Activated naive CD4-positive, alpha-beta T cell treated with anti-CD3 and anti-CD28 coated beads for 36 hours (primary cell): ENCODE measurements at regions of chr5 and their contacts with region 1.

Region 1: DNA sequence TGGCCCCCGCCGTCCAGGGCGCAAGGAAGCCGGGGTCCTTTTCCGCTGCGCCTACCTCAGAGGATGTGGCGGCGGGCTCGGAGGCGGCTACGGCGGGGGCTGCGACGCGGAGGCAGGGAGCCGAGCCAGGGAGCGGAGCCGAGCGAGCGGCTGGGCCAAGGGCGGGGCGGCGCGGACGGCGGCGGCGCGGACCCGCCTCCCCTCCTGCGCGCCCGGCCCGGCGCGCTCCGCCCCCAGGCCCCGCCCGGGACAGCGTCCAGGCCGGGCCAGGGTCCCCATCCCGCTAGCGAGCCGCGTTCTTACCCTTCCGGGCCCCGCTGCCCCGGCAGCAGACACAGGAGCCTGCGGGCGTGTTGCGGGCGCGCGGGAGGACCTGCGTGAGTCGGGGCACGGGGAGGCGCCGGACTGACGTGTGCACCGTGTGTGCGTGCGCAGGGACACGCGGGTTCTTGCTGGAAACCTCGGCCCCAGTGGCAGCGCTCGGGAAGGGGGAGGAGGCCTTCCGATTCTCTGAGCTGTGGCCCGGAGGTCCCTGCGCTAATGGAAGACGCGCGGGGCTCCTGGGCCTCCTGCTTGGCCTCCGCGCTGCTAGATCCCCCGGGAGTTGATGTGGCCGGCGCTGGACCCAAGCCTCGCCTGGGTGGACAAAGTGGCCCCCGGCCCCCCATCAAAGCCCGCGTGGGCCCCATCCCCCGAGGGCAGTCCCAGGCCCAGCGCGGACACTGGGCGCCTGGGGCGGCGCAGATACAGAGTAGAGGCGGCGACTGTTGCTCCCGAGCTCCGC is at the start of gene VDAC1:
- DNase-seq: peak; percentile 79
- H3K4me3 Mint-ChIP-seq: peak within 1 kb of the TSS; percentile 89
- H3K27ac Mint-ChIP-seq: peak within 1 kb of the TSS; percentile 95
- H3K4me1 Mint-ChIP-seq: peaks cover 42% of the 10 kb centered on the region
- H3K27me3 Mint-ChIP-seq: no peaks in the 10 kb centered on the region
- total RNA-seq, gene VDAC1: 485 to 513 TPM

Region 2: DNA sequence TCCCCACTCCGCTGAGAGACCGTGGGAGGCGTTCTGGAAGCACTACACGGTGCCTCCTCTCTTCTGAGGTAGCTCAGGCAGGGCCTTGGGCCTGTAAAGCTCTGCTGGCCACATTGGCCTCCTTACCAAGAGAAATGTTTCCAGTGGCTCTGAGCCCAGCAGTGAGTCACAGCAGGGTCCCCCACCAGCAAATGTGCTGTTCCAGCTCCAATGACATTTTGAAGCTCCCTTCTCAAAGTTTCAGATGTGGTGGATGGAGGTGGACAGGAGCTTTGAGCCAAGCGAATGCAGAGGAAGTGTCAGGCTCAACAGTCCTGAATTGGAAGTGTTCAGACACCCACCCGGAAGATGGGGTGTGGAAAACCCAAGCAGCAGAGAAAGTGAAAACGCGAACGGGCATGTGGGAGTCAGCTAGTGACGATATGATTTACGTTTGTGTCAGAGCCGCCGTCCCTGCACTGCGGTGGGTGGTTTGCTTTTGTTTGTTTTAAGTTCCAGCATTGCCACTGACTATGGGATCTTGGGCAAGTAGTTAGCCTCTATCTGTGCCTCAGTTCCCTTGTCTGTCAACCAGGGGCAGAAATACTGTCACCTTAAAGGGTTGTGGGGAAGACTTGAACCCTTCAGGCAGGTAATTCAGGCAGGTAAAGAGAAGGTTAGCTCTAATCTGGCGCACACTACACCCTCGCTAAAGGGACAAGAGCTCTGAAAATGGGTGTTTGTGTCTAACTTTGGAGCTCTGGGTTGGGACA is 74.5 kb before region 1 on chr5:
- CTCF ChIA-PET with region 1: interaction called, 3 read pairs
- intact Hi-C with region 1: loop called (anchors 2 kb)
- DNase-seq: peak; percentile 88
- H3K4me3 Mint-ChIP-seq: peak overlapping the region; percentile 80
- H3K27ac Mint-ChIP-seq: peak overlapping the region; percentile 97
- H3K4me1 Mint-ChIP-seq: peaks cover 45% of the 10 kb centered on the region
- H3K27me3 Mint-ChIP-seq: no peaks in the 10 kb centered on the region

Region 3: GRCh38 chr5:133968049-133968980 is 36.5 kb before region 1 on chr5 and contains the start of gene C5orf15:
- CTCF ChIA-PET with region 1: no interaction called
- intact Hi-C with region 1: loop called (anchors 1 kb)
- DNase-seq: peak; percentile 96
- H3K4me3 Mint-ChIP-seq: peak within 1 kb of the TSS; percentile 96
- H3K27ac Mint-ChIP-seq: peak within 1 kb of the TSS; percentile 93
- H3K4me1 Mint-ChIP-seq: peaks cover 46% of the 10 kb centered on the region
- H3K27me3 Mint-ChIP-seq: no peaks in the 10 kb centered on the region
- total RNA-seq, gene C5orf15: 18.1 to 18.6 TPM